ENCODE measurements at regions of chr16 and their contacts with region 1.

Region 1: GRCh38 chr16:57623248-57624043 is 5.0 kb upstream of the ADGRG1 start:
- DNase-seq: peak; percentile 91
- ATAC-seq: peak; percentile 21
- H3K4me3 ChIP-seq: peak overlapping the region in 1 of 3 experiments; percentile 37; a peak in 2 of 6 replicates
- H3K27ac ChIP-seq: no peak overlapping the region
- H3K4me1 ChIP-seq: peaks cover 72% of the 10 kb centered on the region
- H3K27me3 ChIP-seq: no peaks in the 10 kb centered on the region
- CTCF ChIP-seq: no peak
- EP300 ChIP-seq: peak; percentile 49 to 88; a peak in 2 of 4 replicates
- POLR2A ChIP-seq: no peak; a peak in 1 of 4 replicates
- RAD21 ChIP-seq: no peak

Region 2: DNA sequence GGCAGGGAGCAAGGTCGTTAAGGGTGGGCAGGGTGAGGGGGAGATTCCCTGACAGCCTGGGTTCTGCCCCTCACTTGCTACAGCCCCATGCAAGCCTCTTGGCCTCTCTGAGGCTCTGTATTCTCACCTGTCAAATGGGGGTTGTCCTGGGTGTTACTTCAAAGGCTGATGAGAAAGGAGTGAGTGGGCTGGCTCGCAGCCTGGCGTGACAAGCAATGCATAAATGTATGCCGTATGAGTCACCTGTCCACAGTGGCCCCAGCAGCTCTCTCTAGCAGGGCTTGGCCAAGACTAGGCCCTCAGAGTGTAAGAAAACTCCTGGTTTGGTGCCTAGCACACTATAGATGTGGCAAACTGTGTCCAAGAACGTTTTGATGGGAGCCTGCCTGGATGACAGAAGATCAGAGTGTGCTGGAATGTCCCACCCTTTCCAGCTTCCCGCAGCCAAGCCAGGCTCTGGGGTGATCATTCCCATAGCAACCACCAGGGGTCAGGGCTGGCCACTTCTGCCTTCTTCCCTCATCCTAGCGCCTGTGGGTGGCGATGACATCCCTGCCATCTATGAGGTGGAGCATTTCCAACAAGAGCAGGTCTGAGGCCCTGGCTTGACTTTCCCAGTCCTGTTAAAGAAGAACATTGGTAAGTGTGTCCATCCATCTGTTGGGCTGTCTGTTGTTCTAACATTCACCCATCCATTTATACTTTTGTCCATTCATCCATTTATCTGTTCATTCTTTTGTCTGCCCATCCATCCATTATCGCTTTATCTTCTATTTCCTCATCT is 32.2 kb before region 1 on chr16:
- CTCF ChIA-PET with region 1: no interaction called
- POLR2A ChIA-PET with region 1: interaction called, 5 read pairs
- in situ Hi-C with region 1: no loop called
- intact Hi-C with region 1: loop called (anchors 1 kb)
- DNase-seq: peak; percentile 80
- ATAC-seq: peak; percentile 99
- H3K4me3 ChIP-seq: no peak overlapping the region
- H3K27ac ChIP-seq: no peak overlapping the region
- H3K4me1 ChIP-seq: peaks cover 9% of the 10 kb centered on the region; the same call in 1 of the 2 replicates
- H3K27me3 ChIP-seq: no peaks in the 10 kb centered on the region; a peak in 1 of 5 replicates
- CTCF ChIP-seq: peak; percentile 97
- EP300 ChIP-seq: no peak
- POLR2A ChIP-seq: no peak
- RAD21 ChIP-seq: peak; percentile 91

Region 3: DNA sequence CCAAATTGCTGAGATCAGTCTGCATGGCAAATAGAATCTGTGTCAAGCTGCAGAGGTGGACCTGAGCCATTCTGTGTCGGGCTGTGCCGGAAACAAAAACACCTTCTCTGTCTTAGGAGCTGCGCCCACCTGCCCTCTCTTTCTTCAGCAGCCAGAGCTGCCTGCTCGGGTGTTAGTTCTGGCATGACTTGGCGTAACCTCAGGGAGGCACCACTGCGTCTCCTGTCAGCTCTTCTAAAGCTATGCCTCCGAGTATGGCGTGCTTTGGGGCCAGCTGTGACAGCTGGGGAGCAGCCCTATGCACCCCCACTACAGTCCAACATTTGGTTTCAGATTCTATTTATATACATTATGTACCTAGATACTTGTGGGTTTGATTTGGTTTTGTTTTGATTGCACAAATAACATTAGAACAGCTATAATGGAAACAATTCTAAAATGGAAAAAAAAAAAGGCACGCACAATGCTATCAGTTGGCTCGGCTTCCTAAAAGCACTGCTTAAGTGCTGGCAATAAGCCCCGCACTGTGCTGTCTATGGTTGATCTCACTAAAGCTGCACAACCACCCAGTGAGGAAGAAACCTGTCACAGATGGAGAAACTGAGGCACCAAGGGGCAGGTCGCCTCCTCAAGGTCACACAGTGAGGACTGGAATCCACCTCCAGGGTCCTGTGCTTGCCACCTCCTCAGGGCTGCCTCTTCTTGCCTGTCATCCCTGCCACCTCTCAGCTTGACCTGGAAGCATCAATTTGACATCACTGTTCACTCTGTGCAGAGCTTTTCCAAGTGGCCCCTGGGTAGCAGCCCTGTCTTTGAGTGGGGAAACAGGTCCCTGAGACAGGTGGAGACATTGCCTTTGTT is 13.7 kb before region 1 on chr16:
- CTCF ChIA-PET with region 1: no interaction called
- POLR2A ChIA-PET with region 1: interaction called, 91 read pairs
- in situ Hi-C with region 1: no loop called
- intact Hi-C with region 1: loop called (anchors 1 kb)
- DNase-seq: no peak
- ATAC-seq: no peak
- H3K4me3 ChIP-seq: no peak overlapping the region
- H3K27ac ChIP-seq: no peak overlapping the region
- H3K4me1 ChIP-seq: peaks cover 57% of the 10 kb centered on the region
- H3K27me3 ChIP-seq: peaks cover 4 to 27% of the 10 kb centered on the region in 2 experiments; a peak in 3 of 5 replicates
- CTCF ChIP-seq: peak; percentile 43; the same call in 1 of the 2 replicates
- EP300 ChIP-seq: no peak
- POLR2A ChIP-seq: no peak
- RAD21 ChIP-seq: no peak

Region 4: DNA sequence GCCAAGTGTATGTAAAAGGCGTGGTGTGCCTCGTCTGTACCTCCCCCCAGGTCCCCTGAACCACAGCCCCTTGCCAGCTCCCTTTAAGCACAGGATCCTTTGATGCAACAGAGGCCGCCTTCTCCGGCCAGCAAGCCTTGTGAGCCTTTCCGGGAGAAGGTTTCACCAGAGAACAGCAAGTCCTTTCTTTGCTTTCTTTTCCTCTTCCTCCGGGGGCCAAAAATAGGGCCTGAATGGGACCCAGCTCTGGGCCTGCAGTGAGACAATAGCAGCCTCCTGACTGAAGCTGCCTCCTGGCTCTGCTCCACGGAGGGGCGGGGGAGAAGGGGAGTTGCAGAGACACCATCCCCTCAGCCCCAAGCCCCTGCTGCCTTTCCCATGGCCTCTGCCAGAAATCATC is 14.0 kb after region 1 on chr16:
- CTCF ChIA-PET with region 1: no interaction called
- POLR2A ChIA-PET with region 1: interaction called, 127 read pairs
- in situ Hi-C with region 1: no loop called
- intact Hi-C with region 1: no loop called
- DNase-seq: no peak
- ATAC-seq: no peak
- H3K4me3 ChIP-seq: no peak overlapping the region
- H3K27ac ChIP-seq: no peak overlapping the region
- H3K4me1 ChIP-seq: peaks cover 81% of the 10 kb centered on the region
- H3K27me3 ChIP-seq: no peaks in the 10 kb centered on the region
- CTCF ChIP-seq: no peak
- EP300 ChIP-seq: no peak
- POLR2A ChIP-seq: no peak
- RAD21 ChIP-seq: no peak

Measured in HepG2 (cell line).